Colonic mucosa (tissue), 4 donors: ENCODE measurements at regions of chr6 and their contacts with region 1.

Region 1: GRCh38 chr6:52664186-52664990 is 6.5 kb upstream of the TMEM14A start:
- DNase-seq: peak; percentile 95
- H3K4me3 ChIP-seq: peak overlapping the region; percentile 64
- H3K27ac ChIP-seq: peak overlapping the region; percentile 65
- H3K4me1 ChIP-seq: peaks cover 4% of the 10 kb centered on the region
- H3K27me3 ChIP-seq: no peaks in the 10 kb centered on the region
- CTCF ChIP-seq: no peak

Region 2: GRCh38 chr6:52284460-52285176 is 379.8 kb before region 1 on chr6 and contains the start of gene MCM3:
- intact Hi-C with region 1: loop called (anchors 5 kb)
- DNase-seq: peak; percentile 98
- H3K4me3 ChIP-seq: peak within 1 kb of the TSS; percentile 87
- H3K27ac ChIP-seq: peak within 1 kb of the TSS; percentile 58
- H3K4me1 ChIP-seq: peaks cover 5% of the 10 kb centered on the region
- H3K27me3 ChIP-seq: no peaks in the 10 kb centered on the region
- CTCF ChIP-seq: no peak
- total RNA-seq, gene MCM3: 28.9 to 117 TPM

Region 3: DNA sequence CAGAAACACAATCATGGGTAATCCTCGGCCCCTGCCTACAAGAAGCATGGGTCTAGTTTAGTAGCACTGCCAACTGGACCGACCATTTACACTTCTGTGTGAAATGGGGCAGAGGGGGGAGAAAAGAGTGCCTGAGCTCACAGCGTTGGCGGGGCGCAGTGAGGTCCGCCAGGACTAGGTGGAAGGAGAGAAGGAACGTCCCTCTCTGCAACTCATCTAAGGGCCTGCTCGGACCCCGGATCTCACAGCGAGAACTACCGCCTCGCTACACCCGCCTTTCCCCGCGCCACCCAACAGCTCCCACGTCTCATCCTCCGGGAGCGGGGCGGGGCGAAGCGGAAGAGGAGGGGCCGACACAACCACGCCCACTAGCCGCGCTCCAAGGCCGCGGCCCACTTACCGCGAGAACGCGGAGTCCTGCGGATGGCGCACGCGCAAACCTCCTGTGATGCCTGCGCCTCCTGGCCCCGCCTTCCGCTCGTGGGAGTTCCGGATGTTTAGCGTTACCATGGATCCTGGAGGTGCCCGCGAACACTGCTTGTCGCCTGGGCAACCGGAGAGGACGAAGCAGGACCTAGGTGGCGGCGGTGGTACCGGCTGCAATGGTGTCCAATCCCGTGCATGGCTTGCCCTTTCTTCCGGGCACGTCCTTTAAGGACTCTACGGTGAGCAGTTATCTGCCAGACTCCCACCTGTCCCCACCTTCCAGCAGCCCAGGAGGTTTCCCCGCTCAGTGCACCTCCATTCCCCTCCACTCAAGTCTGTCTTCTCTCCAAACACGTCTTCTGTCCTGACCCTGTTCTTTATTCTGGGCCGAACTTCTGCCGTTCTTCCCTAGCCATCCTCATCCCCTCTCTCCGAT is 244.3 kb before region 1 on chr6 and contains the start of gene EFHC1:
- intact Hi-C with region 1: loop called (anchors 5 kb)
- DNase-seq: peak; percentile 99
- H3K4me3 ChIP-seq: peak within 1 kb of the TSS; percentile 79
- H3K27ac ChIP-seq: peak within 1 kb of the TSS; percentile 47
- H3K4me1 ChIP-seq: peaks cover 5% of the 10 kb centered on the region
- H3K27me3 ChIP-seq: no peaks in the 10 kb centered on the region
- CTCF ChIP-seq: no peak
- total RNA-seq, gene EFHC1: 6.2 to 9.5 TPM

Region 4: DNA sequence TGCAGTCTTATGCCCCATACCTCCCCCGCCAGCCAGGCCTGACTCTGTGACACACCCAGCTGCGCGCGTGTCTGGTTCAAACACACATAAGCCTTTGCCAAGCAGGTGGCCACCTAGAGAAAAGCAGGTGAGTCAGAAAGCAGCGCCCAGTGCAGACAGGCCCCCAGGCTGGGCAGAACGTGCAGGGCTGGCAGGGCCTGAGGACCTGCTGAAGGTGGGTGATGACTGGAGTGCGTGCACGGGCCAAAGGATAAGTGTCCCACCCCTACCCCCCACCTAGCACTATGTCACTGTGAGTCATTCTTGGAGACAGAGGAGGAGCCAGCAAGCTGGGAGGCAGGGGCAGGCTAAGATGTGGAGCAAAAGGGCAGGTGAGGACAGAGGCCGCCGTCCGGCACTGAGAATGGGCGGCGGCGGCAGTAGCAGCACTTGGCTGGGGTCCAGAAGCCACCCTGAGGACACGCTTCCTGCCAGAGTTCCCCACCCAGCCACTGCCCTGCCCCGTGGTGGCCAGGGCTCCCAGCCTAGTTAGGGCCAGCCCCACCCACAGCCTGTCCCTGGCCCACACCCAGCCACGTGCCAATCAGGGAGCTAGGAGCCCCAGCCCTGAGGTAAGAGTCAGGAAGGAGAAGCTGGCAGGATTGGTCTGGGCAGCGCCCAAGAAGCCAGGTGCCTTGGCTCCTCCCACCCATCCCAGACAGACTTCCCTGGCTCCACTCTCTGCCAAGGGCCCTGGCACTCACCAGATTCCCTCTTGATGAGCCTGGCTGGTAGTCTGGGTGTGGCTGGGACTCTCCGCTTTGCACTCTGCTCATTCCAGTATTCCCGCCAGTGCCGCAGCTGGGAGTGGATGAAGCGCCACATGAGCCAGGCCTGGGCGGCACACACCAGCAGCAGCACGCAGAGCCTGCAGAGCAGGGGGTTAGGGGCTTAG is 160.3 kb before region 1 on chr6:
- intact Hi-C with region 1: loop called (anchors 10 kb)
- DNase-seq: peak; percentile 99
- H3K4me3 ChIP-seq: no peak overlapping the region
- H3K27ac ChIP-seq: peak overlapping the region; percentile 54
- H3K4me1 ChIP-seq: peaks cover 4% of the 10 kb centered on the region
- H3K27me3 ChIP-seq: no peaks in the 10 kb centered on the region
- CTCF ChIP-seq: no peak

Region 5: GRCh38 chr6:53014063-53014462 is 349.7 kb after region 1 on chr6:
- intact Hi-C with region 1: no loop called
- DNase-seq: no peak
- H3K4me3 ChIP-seq: no peak overlapping the region
- H3K27ac ChIP-seq: no peak overlapping the region
- H3K4me1 ChIP-seq: no peaks in the 10 kb centered on the region
- H3K27me3 ChIP-seq: no peaks in the 10 kb centered on the region
- CTCF ChIP-seq: no peak